RWPE1 (cell line): ENCODE measurements at regions of chr17 and their contacts with region 1.

Region 1: DNA sequence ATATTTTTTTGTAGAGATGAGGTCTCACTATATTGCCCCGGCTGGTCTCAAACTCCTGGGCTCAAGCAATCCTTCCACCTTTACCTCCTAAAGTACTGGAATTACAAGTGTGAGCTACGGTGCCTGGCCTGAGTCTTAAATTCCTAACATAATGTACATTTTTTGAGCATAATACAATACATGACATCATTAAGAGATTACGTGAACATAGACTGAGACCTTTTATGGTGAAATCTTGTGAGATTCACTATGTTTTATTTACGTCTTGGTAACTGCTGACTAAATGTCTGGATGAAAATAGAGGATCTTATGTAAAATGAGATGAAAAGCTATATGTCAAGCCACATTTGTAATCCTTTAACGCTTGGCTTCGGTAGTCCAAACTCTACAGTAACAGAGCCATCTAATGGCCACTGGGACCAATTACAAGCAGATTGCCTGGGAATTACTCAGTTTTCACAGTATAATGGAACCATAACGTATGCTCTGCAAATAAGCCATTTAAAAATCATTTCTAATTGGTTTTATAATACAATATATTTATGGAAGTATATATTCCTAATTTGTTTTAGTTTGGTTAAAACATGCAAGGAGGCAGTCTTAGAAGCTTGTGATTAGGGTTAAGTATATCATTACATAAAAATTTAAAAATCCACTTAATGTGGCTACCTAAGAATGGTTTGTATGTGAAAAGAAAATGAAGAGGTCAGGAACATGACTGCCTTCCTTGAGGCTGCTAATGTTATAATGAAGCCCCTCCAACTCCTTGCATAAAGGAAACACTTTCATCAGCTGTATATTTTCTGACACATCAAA is 8.1 kb upstream of the EFCAB13 start:
- DNase-seq: peak; percentile 76
- H3K27ac ChIP-seq: no peak overlapping the region
- CTCF ChIP-seq: peak; percentile 85

Region 2: GRCh38 chr17:47172698-47173565 is 142.7 kb before region 1 on chr17:
- CTCF ChIA-PET with region 1: interaction called, 12 read pairs
- POLR2A ChIA-PET with region 1: no interaction called
- DNase-seq: no peak
- H3K27ac ChIP-seq: no peak overlapping the region
- CTCF ChIP-seq: no peak

Region 3: GRCh38 chr17:47239619-47240374 is 75.9 kb before region 1 on chr17:
- CTCF ChIA-PET with region 1: interaction called, 10 read pairs
- POLR2A ChIA-PET with region 1: no interaction called
- DNase-seq: peak; percentile 84
- H3K27ac ChIP-seq: peak overlapping the region; percentile 75
- CTCF ChIP-seq: no peak